Breast epithelium (tissue), 4 donors: ENCODE measurements at regions of chr16 and their contacts with region 1.

Region 1: GRCh38 chr16:50467943-50468760 is 80.0 kb upstream of the NKD1 start:
- DNase-seq: no peak
- H3K4me3 ChIP-seq: peak overlapping the region; percentile 23 to 65 (median 46)
- H3K27ac ChIP-seq: no peak overlapping the region
- H3K4me1 ChIP-seq: no peaks in the 10 kb centered on the region
- H3K27me3 ChIP-seq: peaks cover 3 to 24% of the 10 kb centered on the region in 2 donors
- CTCF ChIP-seq: no peak
- POLR2A ChIP-seq: no peak

Region 2: DNA sequence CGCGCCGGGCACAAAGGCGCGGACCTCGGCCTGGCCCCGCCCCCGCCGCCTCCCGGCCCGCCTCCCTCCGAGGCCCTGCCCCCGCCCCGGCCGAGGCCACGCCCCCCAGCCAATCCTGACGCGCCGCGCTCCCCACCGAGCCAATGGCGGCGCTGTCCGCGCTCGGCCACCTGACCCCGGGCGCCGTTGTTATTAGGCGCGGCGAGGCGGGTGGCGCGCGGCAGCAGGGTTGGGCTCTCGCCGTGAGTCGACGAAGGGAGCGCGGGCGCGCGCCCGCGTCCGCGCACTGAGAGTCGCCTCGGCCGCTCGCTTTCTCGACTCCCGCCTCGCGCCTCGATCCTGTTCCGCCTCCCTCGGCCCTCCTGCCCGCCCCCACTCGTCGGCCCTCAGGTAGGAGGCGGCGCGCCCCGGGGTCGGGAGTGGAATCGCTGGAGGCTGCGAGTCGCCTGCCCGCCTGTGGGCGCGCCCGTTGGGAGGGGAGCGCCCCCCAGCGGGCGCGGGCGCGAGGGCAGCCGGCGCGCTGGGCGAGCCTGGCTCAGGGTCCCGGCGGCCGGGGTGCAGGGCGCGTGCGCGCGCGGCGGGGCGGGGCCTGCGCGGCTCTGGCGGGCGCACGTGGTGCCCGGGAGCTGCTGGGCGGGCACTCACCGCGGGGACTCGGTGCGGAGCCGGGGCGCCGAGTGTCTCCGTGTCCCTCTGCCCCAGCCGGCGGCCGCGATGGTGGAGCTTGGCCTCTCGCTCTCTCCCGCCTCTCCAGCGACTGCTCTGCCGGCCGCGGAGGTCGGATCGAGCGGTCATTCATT is 1186.1 kb before region 1 on chr16:
- intact Hi-C with region 1: no loop called
- DNase-seq: peak; percentile 60 to 80
- H3K4me3 ChIP-seq: peak overlapping the region; percentile 32 to 68 (median 58)
- H3K27ac ChIP-seq: no peak overlapping the region
- H3K4me1 ChIP-seq: no peaks in the 10 kb centered on the region
- H3K27me3 ChIP-seq: peaks cover 7 to 92% of the 10 kb centered on the region in 2 donors
- CTCF ChIP-seq: peak in 1 of 3 donors; percentile 38
- POLR2A ChIP-seq: no peak

Region 3: GRCh38 chr16:51399908-51400670 is 931.9 kb after region 1 on chr16:
- intact Hi-C with region 1: loop called (anchors 5 kb)
- DNase-seq: no peak
- H3K4me3 ChIP-seq: no peak overlapping the region
- H3K27ac ChIP-seq: no peak overlapping the region
- H3K4me1 ChIP-seq: no peaks in the 10 kb centered on the region
- H3K27me3 ChIP-seq: no peaks in the 10 kb centered on the region
- CTCF ChIP-seq: no peak
- POLR2A ChIP-seq: no peak

Region 4: DNA sequence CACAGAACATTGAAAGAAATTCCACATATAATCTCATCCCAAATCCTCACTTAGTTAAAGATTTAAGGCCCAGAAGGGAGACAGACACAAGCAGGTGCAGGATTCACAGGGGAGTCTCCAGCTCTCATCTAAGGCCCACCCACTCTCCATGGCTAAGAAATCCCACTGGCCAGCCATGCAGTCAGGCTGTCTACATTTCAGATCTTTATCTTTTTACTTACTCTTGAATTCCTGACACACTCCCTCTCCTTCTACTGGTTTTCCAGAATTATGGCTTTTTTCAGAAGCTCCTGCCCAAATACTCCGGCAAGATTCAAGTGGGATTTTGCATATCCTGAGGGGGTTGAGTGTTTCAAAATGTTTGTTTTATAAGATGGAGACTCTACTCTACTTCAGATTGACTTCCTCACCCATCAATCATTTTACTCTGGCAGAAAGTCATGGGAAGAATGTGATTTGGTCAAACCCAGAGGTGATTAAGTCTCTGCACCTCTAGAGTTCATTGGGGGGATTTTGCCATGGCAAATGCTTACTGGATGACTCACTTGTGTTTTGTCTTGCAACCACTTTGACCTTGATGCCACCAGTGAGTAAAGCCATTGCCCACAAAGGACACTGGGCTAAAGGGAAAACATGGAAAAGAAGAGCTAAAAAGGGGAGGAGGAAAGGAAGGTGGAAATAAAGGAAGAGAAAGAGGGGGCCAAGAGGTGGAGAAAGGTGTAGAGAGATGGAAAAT is 1371.7 kb after region 1 on chr16:
- intact Hi-C with region 1: no loop called
- DNase-seq: no peak
- H3K4me3 ChIP-seq: no peak overlapping the region
- H3K27ac ChIP-seq: no peak overlapping the region
- H3K4me1 ChIP-seq: no peaks in the 10 kb centered on the region
- H3K27me3 ChIP-seq: no peaks in the 10 kb centered on the region
- CTCF ChIP-seq: no peak
- POLR2A ChIP-seq: no peak